Activated B cell treated with CpG ODN at 0.5 μM for 24 hours (primary cell): ENCODE measurements at regions of chr18 and their contacts with region 1.

Region 1: GRCh38 chr18:13611601-13612195 is 114.7 kb downstream of the FAM210A start:
- DNase-seq: peak; percentile 46
- ATAC-seq: no peak
- H3K4me3 Mint-ChIP-seq: peak overlapping the region; percentile 95
- H3K27ac Mint-ChIP-seq: peak overlapping the region; percentile 99
- H3K4me1 Mint-ChIP-seq: peaks cover 89% of the 10 kb centered on the region
- H3K27me3 Mint-ChIP-seq: no peaks in the 10 kb centered on the region
- CTCF ChIP-seq: no peak

Region 2: DNA sequence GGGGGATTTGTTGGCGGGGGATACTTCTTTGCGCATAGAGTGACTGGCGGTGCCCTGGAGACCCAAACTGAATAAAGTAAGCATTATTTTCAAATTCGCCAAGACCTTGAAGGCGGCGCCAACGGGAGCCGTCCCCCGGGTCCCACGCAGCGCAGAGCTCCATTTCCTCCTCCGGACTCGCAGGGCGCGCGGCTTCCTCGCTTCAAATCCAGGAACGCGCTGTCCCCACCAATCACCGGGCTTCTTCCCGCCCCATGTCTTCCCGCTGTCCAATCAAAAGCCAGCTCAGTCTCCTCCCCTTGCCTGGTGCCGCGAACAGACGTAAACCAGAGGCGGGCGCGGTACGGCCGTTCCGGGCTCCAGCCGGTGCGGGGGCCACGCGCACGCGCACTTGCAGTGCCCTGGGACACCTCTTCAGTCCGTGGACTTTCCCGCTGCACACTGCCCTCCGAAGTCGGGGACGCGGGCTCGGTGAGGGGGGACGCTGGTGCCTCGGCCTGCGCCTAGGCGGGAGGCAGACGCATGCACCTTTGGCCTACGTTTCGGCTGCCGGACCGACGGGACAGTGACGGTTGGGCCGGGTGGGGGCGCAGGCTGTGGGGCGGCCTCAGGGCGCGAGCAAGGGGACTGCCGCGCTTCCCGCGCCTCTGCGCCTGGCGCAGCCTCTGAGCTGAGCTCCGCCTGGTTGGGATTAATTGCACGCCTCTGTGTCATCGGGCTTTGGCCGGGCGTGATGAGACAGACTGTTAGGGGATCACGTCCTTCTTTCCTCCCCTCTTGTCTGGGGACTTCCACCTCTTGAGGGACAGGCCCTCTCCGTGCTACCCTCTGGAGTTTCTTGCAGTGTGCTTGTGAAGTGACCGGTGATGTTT is 620.5 kb before region 1 on chr18 and contains the start of gene CEP192:
- CTCF ChIA-PET with region 1: no interaction called
- POLR2A ChIA-PET with region 1: interaction called, 4 read pairs
- intact Hi-C with region 1: loop called (anchors 2 kb)
- DNase-seq: peak; percentile 93
- ATAC-seq: peak; percentile 96
- H3K4me3 Mint-ChIP-seq: peak within 1 kb of the TSS; percentile 93
- H3K27ac Mint-ChIP-seq: peak within 1 kb of the TSS; percentile 94
- H3K4me1 Mint-ChIP-seq: peaks cover 32% of the 10 kb centered on the region
- H3K27me3 Mint-ChIP-seq: no peaks in the 10 kb centered on the region
- CTCF ChIP-seq: no peak
- total RNA-seq, gene CEP192: 33.6 and 34.2 TPM in 2 replicates

Region 3: DNA sequence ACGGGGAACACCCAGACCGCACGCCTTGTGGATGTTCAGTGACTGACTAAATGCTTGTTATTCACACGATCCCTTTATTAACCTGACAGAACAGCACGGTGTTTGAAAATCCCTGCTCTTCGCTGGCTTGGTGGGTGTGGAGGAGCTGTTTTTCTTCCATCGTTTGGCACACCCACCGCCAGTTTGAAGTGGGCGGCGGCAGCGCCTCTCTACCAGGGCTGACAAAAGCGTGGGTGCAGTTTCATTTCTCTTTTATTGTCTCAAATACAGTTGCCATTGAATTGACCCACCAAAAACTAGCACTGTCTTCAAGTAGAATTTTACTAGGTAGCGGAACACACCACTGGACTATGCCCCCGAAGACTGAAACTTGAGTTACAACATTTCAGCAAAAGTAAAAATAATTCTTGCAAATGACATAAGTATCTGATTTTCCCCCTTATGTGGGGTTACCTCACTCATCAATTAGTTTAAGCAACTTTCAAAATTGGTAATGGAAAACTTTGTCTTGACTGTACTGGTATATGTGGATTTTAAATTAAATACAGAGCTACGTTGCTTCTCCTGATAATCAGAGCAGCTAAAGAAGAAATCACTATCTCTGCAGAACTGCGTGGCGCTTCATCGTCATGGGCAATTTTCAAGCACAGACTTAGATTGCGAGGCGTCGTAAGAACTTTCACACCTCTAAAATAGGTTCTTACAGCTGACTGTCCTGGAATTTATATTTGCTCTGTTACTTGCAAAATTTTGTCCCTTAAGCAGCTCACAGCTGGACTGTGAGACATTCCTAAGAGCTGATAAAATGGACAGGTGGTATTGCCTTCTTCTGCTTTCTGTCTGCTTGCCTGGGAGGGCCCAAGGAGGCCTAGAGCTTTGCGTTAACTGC is 332.3 kb before region 1 on chr18:
- CTCF ChIA-PET with region 1: no interaction called
- POLR2A ChIA-PET with region 1: no interaction called
- intact Hi-C with region 1: no loop called
- DNase-seq: no peak
- ATAC-seq: peak; percentile 79
- H3K4me3 Mint-ChIP-seq: peak overlapping the region; percentile 39
- H3K27ac Mint-ChIP-seq: no peak overlapping the region
- H3K4me1 Mint-ChIP-seq: peaks cover 16% of the 10 kb centered on the region
- H3K27me3 Mint-ChIP-seq: no peaks in the 10 kb centered on the region
- CTCF ChIP-seq: no peak

Region 4: GRCh38 chr18:13435596-13436327 is 175.9 kb before region 1 on chr18:
- CTCF ChIA-PET with region 1: no interaction called
- POLR2A ChIA-PET with region 1: no interaction called
- intact Hi-C with region 1: no loop called
- DNase-seq: no peak
- ATAC-seq: no peak
- H3K4me3 Mint-ChIP-seq: no peak overlapping the region
- H3K27ac Mint-ChIP-seq: no peak overlapping the region
- H3K4me1 Mint-ChIP-seq: peaks cover 13% of the 10 kb centered on the region
- H3K27me3 Mint-ChIP-seq: no peaks in the 10 kb centered on the region
- CTCF ChIP-seq: no peak

Region 5: DNA sequence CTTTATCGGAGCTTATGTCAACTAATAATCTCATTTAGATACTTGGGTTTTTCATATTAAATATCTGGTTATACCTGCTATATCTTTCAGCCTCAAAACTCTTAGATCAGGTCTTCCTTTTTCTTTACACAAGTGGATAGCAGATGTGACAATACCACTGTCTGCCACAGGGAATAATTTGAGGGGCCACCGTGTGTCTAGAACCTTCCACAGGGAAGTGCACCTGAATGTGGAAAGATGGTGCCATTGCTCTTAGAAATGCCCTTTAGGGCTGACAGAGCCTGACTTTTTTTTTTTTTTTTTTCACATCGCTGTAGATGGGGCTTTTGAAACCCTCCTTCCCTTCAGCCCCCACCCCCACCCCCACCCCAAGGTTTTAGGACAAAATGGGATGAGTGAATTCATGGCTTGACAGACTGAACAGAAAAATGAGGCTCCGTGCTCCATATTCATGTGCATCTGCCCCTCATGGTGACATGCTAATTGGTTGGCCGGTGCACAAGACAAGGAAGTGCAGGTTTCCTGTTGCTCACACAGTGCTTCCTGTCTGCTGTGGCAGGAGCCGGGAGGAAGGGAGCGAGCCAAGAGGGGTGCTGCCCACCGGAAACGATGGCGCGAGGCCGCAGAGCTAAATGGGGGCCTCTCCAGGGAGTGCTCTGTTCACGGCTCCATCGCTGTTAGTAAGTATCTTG is 147.1 kb before region 1 on chr18:
- CTCF ChIA-PET with region 1: no interaction called
- POLR2A ChIA-PET with region 1: no interaction called
- intact Hi-C with region 1: loop called (anchors 2 kb)
- DNase-seq: peak; percentile 54
- ATAC-seq: peak; percentile 91
- H3K4me3 Mint-ChIP-seq: peak overlapping the region; percentile 91
- H3K27ac Mint-ChIP-seq: peak overlapping the region; percentile 91
- H3K4me1 Mint-ChIP-seq: peaks cover 30% of the 10 kb centered on the region
- H3K27me3 Mint-ChIP-seq: no peaks in the 10 kb centered on the region
- CTCF ChIP-seq: no peak

Region 6: DNA sequence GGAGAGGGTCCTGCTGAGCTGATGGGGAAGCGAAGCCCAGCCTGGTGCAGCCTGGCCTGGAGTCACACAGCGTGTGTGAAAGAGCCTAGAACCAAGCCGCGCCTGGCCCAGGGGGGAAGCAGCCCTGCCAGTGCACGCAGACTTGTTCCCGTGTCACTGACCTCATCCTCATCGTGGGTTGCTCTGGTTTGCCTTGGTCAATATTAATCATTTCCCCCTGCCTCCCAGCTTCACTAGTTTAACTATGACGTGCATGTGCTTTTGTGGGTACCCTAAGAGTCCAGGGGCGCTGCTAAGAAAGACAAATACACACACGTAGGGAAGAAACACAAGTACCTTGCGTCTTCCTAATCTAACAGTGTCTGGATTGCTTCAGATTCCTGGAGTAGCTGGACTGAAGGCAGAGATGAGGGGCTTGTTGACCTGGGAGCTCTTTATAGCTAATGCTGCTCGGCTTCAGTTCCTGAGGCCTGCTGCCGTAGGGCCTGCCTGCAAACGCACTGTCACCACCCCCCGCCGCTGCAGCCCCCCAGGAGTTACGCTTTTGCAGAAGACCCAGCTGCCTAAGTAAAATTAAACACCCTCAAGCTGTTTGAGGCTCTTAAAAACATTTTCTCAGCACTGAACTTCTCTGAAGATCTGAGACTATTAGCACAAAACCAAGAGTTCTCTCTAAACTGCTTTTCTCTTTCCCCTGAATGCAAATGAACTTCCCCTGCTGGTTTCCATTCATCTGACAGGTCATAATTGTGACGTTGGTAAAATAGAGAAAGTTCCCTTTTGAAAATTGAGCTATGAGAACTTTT is 44.6 kb before region 1 on chr18:
- CTCF ChIA-PET with region 1: interaction called, 171 read pairs
- POLR2A ChIA-PET with region 1: interaction called, 1,007 read pairs
- intact Hi-C with region 1: loop called (anchors 1 kb)
- DNase-seq: peak; percentile 62
- ATAC-seq: peak; percentile 53
- H3K4me3 Mint-ChIP-seq: peak overlapping the region; percentile 81
- H3K27ac Mint-ChIP-seq: peak overlapping the region; percentile 99
- H3K4me1 Mint-ChIP-seq: peaks cover 83% of the 10 kb centered on the region
- H3K27me3 Mint-ChIP-seq: no peaks in the 10 kb centered on the region
- CTCF ChIP-seq: no peak

Region 7: GRCh38 chr18:13597068-13597467 is 14.6 kb before region 1 on chr18:
- CTCF ChIA-PET with region 1: interaction called, 3 read pairs
- POLR2A ChIA-PET with region 1: interaction called, 33 read pairs
- intact Hi-C with region 1: loop called (anchors 1 kb)
- DNase-seq: no peak
- ATAC-seq: no peak
- H3K4me3 Mint-ChIP-seq: no peak overlapping the region
- H3K27ac Mint-ChIP-seq: no peak overlapping the region
- H3K4me1 Mint-ChIP-seq: peaks cover 17% of the 10 kb centered on the region
- H3K27me3 Mint-ChIP-seq: no peaks in the 10 kb centered on the region
- CTCF ChIP-seq: no peak

Region 8: GRCh38 chr18:14104906-14105748 is 493.4 kb after region 1 on chr18:
- CTCF ChIA-PET with region 1: no interaction called
- POLR2A ChIA-PET with region 1: no interaction called
- intact Hi-C with region 1: no loop called
- DNase-seq: no peak
- ATAC-seq: no peak
- H3K4me3 Mint-ChIP-seq: no peak overlapping the region
- H3K27ac Mint-ChIP-seq: no peak overlapping the region
- H3K4me1 Mint-ChIP-seq: no peaks in the 10 kb centered on the region
- H3K27me3 Mint-ChIP-seq: no peaks in the 10 kb centered on the region
- CTCF ChIP-seq: no peak